Activated CD4-positive, alpha-beta T cell treated with anti-CD3 and anti-CD28 coated beads, Interleukin-2, amount 10 ng/mL, durations not matched to agents 24 days and 14 days (primary cell): ENCODE measurements at regions of chr1 and their contacts with region 1.

Region 1: DNA sequence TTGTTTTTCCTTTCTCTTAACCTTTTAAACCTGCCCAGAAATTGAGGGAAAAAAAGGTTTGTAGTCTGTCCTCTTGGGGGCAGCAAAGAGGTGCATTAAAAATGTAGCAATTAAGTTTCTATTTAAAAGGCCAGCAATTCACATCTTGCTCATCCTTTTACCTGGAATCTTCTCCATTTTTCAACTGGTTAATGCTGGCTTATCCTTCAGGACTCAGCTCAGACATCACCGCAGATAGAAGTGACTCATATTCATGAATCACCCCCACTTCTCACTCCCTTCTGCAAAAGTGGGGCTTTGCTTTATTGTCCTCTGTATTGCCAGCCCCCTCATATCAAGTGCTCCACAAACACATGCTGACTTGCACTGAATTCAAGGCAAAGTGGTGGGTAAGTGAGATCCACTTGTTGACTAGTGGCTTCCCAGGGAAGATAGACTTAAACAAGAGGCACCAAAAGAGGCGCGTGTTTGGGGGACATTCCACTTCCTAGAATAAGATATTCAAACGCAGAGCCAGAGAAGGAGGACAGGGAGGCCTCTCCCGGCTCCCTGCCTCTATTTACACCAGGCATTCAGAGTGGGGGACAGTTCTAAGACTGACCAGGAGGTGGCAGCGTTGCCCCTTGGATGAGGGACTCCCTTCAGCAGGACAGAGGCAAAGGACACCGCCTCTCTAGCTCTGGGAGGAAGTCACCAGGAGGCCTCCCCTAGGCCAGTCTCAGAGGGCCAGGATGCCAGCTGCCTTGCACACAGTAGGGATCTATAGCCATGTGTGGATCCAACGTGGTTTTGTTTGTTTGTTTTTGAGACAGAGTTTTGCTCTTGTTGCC is 23.2 kb upstream of the ZNF648 start:
- DNase-seq: peak; percentile 95
- H3K4me3 Mint-ChIP-seq: peak overlapping the region; percentile 13
- H3K27ac Mint-ChIP-seq: peak overlapping the region; percentile 66
- H3K4me1 Mint-ChIP-seq: peaks cover 51% of the 10 kb centered on the region
- H3K27me3 Mint-ChIP-seq: no peaks in the 10 kb centered on the region

Region 2: GRCh38 chr1:181479137-181479745 is 605.5 kb before region 1 on chr1:
- intact Hi-C with region 1: loop called (anchors 1 kb)
- DNase-seq: peak; percentile 79
- H3K4me3 Mint-ChIP-seq: no peak overlapping the region
- H3K27ac Mint-ChIP-seq: no peak overlapping the region
- H3K4me1 Mint-ChIP-seq: peaks cover 7% of the 10 kb centered on the region
- H3K27me3 Mint-ChIP-seq: peaks cover 36% of the 10 kb centered on the region

Region 3: GRCh38 chr1:182143154-182143657 is 58.5 kb after region 1 on chr1:
- intact Hi-C with region 1: loop called (anchors 1 kb)
- DNase-seq: peak; percentile 96
- H3K4me3 Mint-ChIP-seq: no peak overlapping the region
- H3K27ac Mint-ChIP-seq: no peak overlapping the region
- H3K4me1 Mint-ChIP-seq: peaks cover 25% of the 10 kb centered on the region
- H3K27me3 Mint-ChIP-seq: peaks cover 6% of the 10 kb centered on the region

Region 4: GRCh38 chr1:182249201-182249676 is 164.5 kb after region 1 on chr1:
- intact Hi-C with region 1: loop called (anchors 5 kb)
- DNase-seq: peak; percentile 79
- H3K4me3 Mint-ChIP-seq: no peak overlapping the region
- H3K27ac Mint-ChIP-seq: peak overlapping the region; percentile 80
- H3K4me1 Mint-ChIP-seq: peaks cover 14% of the 10 kb centered on the region
- H3K27me3 Mint-ChIP-seq: no peaks in the 10 kb centered on the region

Region 5: GRCh38 chr1:182588500-182589452 is 504.1 kb after region 1 on chr1 and contains the start of gene RNASEL:
- intact Hi-C with region 1: loop called (anchors 5 kb)
- DNase-seq: peak; percentile 85
- H3K4me3 Mint-ChIP-seq: peak within 1 kb of the TSS; percentile 96
- H3K27ac Mint-ChIP-seq: peak within 1 kb of the TSS; percentile 97
- H3K4me1 Mint-ChIP-seq: peaks cover 34% of the 10 kb centered on the region
- H3K27me3 Mint-ChIP-seq: peaks cover 15% of the 10 kb centered on the region
- total RNA-seq, gene RNASEL: 3.4 and 4.8 TPM in 2 replicates

Region 6: GRCh38 chr1:182781841-182782586 is 697.3 kb after region 1 on chr1:
- intact Hi-C with region 1: loop called (anchors 2 kb)
- DNase-seq: peak; percentile 91
- H3K4me3 Mint-ChIP-seq: no peak overlapping the region
- H3K27ac Mint-ChIP-seq: no peak overlapping the region
- H3K4me1 Mint-ChIP-seq: peaks cover 21% of the 10 kb centered on the region
- H3K27me3 Mint-ChIP-seq: peaks cover 3% of the 10 kb centered on the region